Prostate gland (tissue), 2 donors: ENCODE measurements at regions of chr12 and their contacts with region 1.

Region 1: DNA sequence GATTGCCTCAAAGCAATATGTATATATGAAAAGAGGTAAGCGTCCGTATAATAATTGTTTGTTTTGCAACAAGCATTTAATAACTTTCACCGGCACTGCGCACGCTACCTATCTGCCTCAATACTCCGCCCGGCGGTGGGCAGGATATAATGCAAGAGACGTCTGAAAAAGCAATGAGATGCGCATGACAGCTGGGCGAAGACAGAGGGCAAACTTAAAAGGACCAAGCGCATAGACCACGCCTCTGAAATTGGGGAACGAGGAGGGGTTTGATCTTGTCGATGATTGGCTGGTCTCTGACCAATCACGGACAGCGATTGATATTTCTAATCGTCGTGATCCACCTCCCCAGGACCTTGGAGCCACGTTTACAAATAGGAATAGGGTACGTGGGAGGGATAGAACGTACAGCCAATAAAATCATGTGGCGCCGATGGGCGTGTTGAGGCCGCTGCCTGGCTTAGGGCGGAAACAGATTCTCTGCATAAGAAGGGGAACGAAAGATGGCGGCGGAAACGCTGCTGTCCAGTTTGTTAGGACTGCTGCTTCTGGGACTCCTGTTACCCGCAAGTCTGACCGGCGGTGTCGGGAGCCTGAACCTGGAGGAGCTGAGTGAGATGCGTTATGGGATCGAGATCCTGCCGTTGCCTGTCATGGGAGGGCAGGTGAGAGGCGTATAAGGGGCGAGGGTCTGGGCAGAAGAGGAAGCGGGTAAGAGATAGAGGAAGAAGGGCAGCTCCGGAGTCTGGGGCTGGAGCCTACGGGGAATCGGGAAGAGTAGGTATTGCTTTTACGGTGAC is at the start of gene OS9:
- DNase-seq: peak; percentile 99
- H3K4me3 ChIP-seq: peak within 1 kb of the TSS; percentile 72 to 84
- H3K27ac ChIP-seq: peak within 1 kb of the TSS; percentile 62 to 76
- H3K4me1 ChIP-seq: peaks cover 4% of the 10 kb centered on the region
- H3K27me3 ChIP-seq: no peaks in the 10 kb centered on the region
- CTCF ChIP-seq: peak; percentile 54 to 94 (median 84)
- POLR2A ChIP-seq: peak; percentile 74
- total RNA-seq, gene OS9: 210 to 321 TPM

Region 2: GRCh38 chr12:57632694-57633477 is 61.0 kb before region 1 on chr12 and contains the start of gene B4GALNT1:
- intact Hi-C with region 1: loop called (anchors 5 kb)
- DNase-seq: no peak
- H3K4me3 ChIP-seq: peak within 1 kb of the TSS; percentile 41 to 42
- H3K27ac ChIP-seq: no peak within 1 kb of the TSS
- H3K4me1 ChIP-seq: peaks cover 3% of the 10 kb centered on the region
- H3K27me3 ChIP-seq: no peaks in the 10 kb centered on the region
- CTCF ChIP-seq: peak; percentile 40 to 85 (median 58)
- POLR2A ChIP-seq: no peak
- total RNA-seq, gene B4GALNT1: 2.2 to 6.7 TPM